ENCODE measurements at regions of chr1 and their contacts with region 1.

Region 1: DNA sequence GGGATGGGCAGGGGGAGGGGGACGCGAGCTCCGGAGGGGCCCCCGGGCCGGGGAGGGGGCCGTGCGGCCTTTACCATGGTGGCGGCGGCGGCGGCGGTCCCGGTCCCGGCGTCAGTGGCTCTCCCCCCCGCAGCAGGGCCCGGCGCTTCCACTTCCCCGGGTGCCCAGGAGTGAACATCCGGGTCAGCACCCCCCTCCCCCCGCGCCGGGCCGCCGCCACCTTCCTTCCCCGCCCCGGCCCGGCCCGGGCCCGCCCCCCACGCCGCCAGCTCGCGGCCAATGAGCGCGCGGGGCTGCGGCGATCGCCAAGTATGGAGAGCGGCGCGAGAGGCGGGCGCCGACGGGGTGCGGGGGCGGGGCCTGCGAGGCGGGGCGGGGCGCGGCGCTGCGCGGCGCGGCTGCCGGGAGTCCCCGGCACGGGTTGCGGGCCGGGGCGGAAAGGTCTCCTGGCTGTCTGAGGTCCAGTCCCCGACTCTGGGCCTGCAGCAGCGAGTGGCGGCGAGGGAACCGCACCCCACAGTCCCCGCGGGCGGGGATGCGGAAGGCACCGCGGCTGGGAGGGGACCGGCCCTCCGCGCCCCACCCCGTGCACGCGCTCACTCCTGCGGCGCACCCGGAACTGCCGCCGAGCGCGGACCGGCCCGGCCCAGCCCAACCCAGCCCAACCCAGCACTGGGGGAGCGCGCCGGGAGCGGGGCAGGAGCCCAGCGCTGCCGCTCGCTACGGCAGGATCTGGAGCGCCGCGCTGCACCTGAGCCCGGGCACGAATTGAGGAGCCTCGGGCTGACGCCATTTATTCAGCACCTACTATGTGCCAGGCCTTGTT is at the start of gene CAPZB:
- DNase-seq: peak; percentile 94 to 99 (median 95)
- H3K4me3 ChIP-seq: peak within 1 kb of the TSS; percentile 74 to 95 (median 80)
- H3K27ac ChIP-seq: peak within 1 kb of the TSS; percentile 97
- H3K4me1 ChIP-seq: peaks cover 0 to 48% (median 28%) of the 10 kb centered on the region in 3 donors
- H3K27me3 ChIP-seq: no peaks in the 10 kb centered on the region
- CTCF ChIP-seq: no peak
- total RNA-seq, gene CAPZB: 265 TPM

Region 2: DNA sequence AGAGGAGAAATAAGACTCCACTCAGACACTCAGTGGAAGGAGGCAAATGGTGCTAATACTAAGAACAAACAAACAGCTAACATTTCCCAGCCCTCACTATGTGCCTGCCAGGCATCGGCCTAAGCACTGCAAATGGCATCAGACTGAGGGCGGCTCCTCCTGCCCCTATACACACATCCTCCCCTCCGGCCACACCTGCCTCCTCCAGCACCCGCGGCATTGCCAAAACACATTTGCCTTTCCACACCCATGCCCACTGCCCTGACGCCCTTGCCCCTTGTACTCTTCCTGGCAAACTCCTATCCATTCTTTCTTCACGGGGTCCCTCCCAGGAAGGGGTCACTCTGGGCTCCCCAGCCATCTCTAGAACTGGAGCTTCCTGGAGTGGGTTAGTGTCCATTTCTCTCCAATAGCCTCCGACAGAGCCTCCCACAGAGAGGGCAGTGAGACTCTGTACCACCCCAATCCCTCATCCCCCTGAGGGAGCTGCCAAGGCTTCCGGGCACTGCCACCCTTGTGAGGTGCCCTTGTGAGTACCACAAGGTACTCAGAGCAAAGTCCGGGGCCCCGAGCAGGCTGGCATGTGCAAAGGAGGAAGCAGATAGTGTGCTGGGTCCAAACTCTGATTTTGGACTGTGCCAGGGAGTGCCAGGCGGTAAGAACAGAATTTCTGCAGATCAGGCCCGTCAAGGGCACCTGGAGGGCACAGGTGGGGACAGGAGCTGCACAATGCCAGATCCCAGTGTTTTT is 198.0 kb before region 1 on chr1:
- intact Hi-C with region 1: no loop called
- DNase-seq: no peak
- H3K4me3 ChIP-seq: peak overlapping the region in 2 of 3 donors; percentile 62 to 67
- H3K27ac ChIP-seq: peak overlapping the region; percentile 40 to 81
- H3K4me1 ChIP-seq: peaks cover 0 to 4% (median 3%) of the 10 kb centered on the region in 3 donors
- H3K27me3 ChIP-seq: no peaks in the 10 kb centered on the region
- CTCF ChIP-seq: no peak

Region 3: GRCh38 chr1:19606817-19607642 is 121.5 kb after region 1 on chr1:
- intact Hi-C with region 1: no loop called
- DNase-seq: no peak
- H3K4me3 ChIP-seq: no peak overlapping the region
- H3K27ac ChIP-seq: no peak overlapping the region
- H3K4me1 ChIP-seq: peaks cover 0 to 18% (median 6%) of the 10 kb centered on the region in 3 donors
- H3K27me3 ChIP-seq: no peaks in the 10 kb centered on the region
- CTCF ChIP-seq: no peak

Region 4: DNA sequence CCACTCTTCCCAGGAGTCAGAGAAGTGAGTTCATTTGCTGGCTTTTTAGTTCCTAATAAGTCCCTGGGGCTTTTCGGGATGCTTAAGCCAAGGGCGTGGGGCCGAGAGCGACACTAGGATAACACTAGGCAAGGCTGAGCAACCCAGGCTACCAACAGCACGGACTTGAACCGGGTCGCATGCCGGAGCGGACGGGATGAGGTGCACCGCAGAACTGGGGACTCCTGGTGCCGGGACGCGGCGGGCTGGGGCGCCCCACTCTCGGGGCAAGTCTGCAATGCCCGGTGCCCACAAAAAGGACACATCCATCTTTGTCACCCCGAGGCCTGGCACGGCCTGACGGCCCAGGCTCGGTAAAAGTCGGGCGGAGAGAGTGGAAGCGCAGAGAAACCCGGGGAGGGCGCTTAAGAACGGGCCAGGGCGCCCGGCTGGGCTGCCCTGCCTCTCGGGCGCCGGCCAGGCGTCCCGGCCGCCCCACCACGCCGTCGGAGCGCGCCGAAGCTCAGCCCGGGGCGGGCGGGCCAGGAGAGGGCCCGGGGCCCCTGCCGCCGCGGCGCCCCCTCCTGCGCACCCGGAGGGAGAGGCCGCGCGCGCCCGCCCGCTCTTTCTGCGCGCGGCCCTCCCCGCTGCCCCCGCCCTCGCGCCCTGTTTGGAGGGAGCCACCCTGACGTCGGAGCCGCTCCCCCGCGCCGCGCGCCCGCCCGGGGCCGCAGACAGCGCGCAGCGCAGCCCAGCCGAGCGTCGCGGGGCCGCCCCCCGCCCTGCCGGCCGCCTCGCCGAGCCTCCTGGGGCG is 158.2 kb after region 1 on chr1 and contains the start of gene NBL1:
- intact Hi-C with region 1: loop called (anchors 10 kb)
- DNase-seq: peak; percentile 69 to 91 (median 72)
- H3K4me3 ChIP-seq: peak within 1 kb of the TSS; percentile 34 to 67 (median 56)
- H3K27ac ChIP-seq: peak within 1 kb of the TSS; percentile 9 to 32
- H3K4me1 ChIP-seq: peaks cover 0 to 20% (median 11%) of the 10 kb centered on the region in 3 donors
- H3K27me3 ChIP-seq: no peaks in the 10 kb centered on the region
- CTCF ChIP-seq: no peak
- total RNA-seq, gene NBL1: 141 TPM

Measured in kidney (tissue), 22 donors.